ENCODE measurements at regions of chrX and their contacts with region 1.

Region 1: GRCh38 chrX:42992199-42992943 is 214.4 kb upstream of the PPP1R2C start:
- DNase-seq: no peak
- CTCF ChIP-seq: no peak

Region 2: GRCh38 chrX:42934020-42934726 is 58.2 kb before region 1 on chrX:
- in situ Hi-C with region 1: loop called (anchors 10 kb)
- DNase-seq: peak; percentile 7
- CTCF ChIP-seq: no peak

Region 3: GRCh38 chrX:43141885-43142284 is 149.5 kb after region 1 on chrX:
- in situ Hi-C with region 1: no loop called
- DNase-seq: no peak
- CTCF ChIP-seq: no peak

Measured in GM13976 (cell line).